ENCODE measurements at regions of chr13 and their contacts with region 1.

Region 1: DNA sequence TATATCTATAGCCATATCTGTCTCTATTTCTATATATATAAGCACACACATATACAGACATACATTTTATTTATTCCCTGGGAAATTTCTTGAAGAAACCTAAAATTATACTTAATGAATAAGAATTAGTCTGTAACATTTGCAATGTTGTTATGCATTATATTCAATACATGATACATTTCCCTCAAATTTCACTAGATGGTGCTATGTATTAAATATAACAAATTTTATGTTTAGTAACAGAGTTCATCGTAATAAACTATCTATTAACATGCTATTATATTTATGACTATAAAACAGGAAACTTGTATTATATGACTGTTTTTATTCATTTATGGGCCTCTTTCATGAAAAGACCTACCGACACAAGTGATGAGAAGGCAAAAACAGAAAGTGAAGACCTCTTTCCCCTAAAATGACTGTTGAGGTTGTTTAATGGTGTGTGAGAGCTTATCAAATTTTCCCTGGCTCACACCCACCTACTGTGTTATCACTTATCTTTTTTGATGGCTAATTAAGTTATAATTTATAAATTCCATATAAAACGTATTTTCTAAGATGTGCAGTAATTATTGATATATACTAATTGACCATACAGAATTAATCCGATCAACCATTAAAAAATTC is 881.9 kb downstream of the SLITRK6 start:
- DNase-seq: no peak
- H3K4me3 ChIP-seq: no peak overlapping the region
- H3K27ac ChIP-seq: no peak overlapping the region
- H3K4me1 ChIP-seq: no peaks in the 10 kb centered on the region
- H3K27me3 ChIP-seq: no peaks in the 10 kb centered on the region
- CTCF ChIP-seq: peak in 3 of 4 experiments; percentile 37 to 49 (median 45)
- POLR2A ChIP-seq: no peak

Region 2: GRCh38 chr13:85806553-85807175 is 889.3 kb after region 1 on chr13:
- intact Hi-C with region 1: loop called (anchors 2 kb)
- DNase-seq: no peak
- H3K4me3 ChIP-seq: no peak overlapping the region
- H3K27ac ChIP-seq: no peak overlapping the region
- H3K4me1 ChIP-seq: no peaks in the 10 kb centered on the region
- H3K27me3 ChIP-seq: no peaks in the 10 kb centered on the region
- CTCF ChIP-seq: peak; percentile 48 to 84 (median 76)
- POLR2A ChIP-seq: no peak

Measured in prostate gland (tissue), 2 donors.